Naive thymus-derived CD4-positive, alpha-beta T cell (primary cell): ENCODE measurements at regions of chr15 and their contacts with region 1.

Region 1: DNA sequence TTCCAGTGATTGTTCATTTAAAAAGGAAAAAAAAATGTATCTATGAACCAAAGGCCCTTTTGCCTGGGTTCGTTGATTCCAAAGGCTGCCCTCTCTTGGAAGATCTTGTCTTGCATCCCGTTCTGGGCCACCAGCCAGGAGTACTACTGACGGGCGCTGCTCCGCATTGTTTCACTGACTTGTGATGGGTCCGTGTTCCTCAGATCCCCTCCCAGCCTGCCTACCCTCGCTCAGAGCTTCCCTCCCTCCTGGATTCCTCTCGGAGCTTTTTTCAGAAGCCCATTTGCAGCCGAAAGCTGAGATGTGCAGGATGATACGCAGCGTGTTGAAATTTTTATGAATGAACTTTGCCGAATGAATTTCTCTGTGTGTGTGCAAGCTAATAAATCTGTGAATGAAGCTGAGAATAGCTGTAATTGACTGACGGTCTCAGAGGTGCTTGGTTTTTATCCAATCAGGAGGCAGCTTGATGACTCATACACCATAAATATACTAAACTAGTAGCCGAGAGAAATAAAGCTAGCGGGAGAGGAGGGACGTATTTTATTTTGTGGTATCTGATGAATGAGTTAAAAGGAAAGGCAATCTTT is at the start of gene SHC4:
- DNase-seq: peak in 4 of 9 donors; percentile 21 to 37 (median 32)
- ATAC-seq: peak; percentile 64
- H3K4me3 ChIP-seq: peak within 1 kb of the TSS; percentile 58
- H3K4me3 Mint-ChIP-seq: peak within 1 kb of the TSS; percentile 68 to 91 (median 84)
- H3K27ac ChIP-seq: no peak within 1 kb of the TSS
- H3K27ac Mint-ChIP-seq: peak within 1 kb of the TSS in 3 of 9 donors; percentile 41 to 68 (median 56)
- H3K4me1 ChIP-seq: peaks cover 17 to 23% of the 10 kb centered on the region in 2 donors
- H3K4me1 Mint-ChIP-seq: peaks cover 15 to 41% (median 21%) of the 10 kb centered on the region in 7 donors
- H3K27me3 ChIP-seq: peaks cover 0 to 18% of the 10 kb centered on the region in 2 donors
- H3K27me3 Mint-ChIP-seq: peaks cover 13 to 65% (median 44%) of the 10 kb centered on the region in 5 donors
- total RNA-seq, gene SHC4: 1.2 TPM in 1 of 5 experiments, not detected in the others

Region 2: DNA sequence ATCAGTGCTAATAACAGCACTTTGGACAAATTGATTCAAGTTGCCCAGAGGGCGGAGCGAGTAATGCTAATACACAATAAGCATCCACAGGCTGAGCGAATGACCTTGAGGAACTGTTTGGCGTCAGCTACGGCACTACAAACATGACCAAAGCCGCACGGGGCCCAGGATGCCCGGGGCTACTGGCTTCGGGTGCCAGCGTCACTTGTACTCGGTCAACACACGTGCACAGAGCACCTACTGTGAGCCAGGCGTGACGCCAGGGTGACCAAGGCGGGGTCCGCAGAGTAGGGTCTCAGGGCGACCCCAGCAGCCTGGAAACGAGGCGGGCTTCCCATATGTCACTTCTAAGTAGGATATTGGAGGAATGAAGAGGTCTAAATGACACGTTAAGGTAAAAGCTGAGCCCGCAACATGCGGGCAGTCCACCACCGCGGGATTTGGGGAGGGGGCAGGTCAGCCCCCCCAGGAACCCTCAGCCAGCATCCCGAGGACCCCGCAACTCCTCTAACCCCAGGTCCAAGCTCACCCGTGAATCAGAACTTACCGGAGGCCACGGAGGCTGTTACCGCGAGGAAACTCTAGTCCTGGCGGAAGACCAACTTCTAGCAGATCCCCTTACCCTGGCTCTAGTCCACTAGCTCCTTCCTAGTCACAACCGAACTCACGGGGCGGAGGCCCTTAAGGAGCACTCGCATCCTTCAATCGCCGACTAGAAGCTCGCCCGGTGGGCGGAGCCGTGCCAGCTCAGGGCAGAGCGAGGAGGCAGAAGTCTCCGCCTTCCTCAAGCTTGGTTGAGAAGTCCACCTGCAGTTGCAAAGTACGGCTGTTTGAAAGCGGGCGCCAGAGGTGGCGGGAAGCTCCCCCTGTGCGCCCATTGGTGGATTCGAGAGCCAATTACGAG is 153.0 kb before region 1 on chr15 and contains the start of gene CEP152:
- CTCF ChIA-PET with region 1: no interaction called
- POLR2A ChIA-PET with region 1: no interaction called
- intact Hi-C with region 1: loop called in 1 of 2 experiments (anchors 2 kb)
- DNase-seq: peak; percentile 91 to 99 (median 98)
- ATAC-seq: peak; percentile 98
- H3K4me3 ChIP-seq: peak within 1 kb of the TSS; percentile 78
- H3K4me3 Mint-ChIP-seq: peak within 1 kb of the TSS; percentile 82 to 96 (median 89)
- H3K27ac ChIP-seq: peak within 1 kb of the TSS; percentile 76
- H3K27ac Mint-ChIP-seq: peak within 1 kb of the TSS; percentile 14 to 96 (median 87)
- H3K4me1 ChIP-seq: peaks cover 9 to 13% of the 10 kb centered on the region in 2 donors
- H3K4me1 Mint-ChIP-seq: peaks cover 12 to 38% (median 33%) of the 10 kb centered on the region in 7 donors
- H3K27me3 ChIP-seq: no peaks in the 10 kb centered on the region
- H3K27me3 Mint-ChIP-seq: peaks cover 0 to 24% (median 0%) of the 10 kb centered on the region in 5 donors
- total RNA-seq, gene CEP152: 6.2 to 26.3 (median 17.0) TPM

Region 3: GRCh38 chr15:48925714-48926223 is 37.9 kb before region 1 on chr15:
- CTCF ChIA-PET with region 1: no interaction called
- POLR2A ChIA-PET with region 1: no interaction called
- intact Hi-C with region 1: loop called in 1 of 2 experiments (anchors 5 kb)
- DNase-seq: peak in 1 of 9 donors; percentile 40
- ATAC-seq: no peak
- H3K4me3 ChIP-seq: no peak overlapping the region
- H3K4me3 Mint-ChIP-seq: peak overlapping the region in 1 of 10 donors; percentile 11
- H3K27ac ChIP-seq: no peak overlapping the region
- H3K27ac Mint-ChIP-seq: peak overlapping the region in 1 of 9 donors; percentile 79
- H3K4me1 ChIP-seq: no peaks in the 10 kb centered on the region
- H3K4me1 Mint-ChIP-seq: peaks cover 0 to 42% (median 0%) of the 10 kb centered on the region in 7 donors
- H3K27me3 ChIP-seq: no peaks in the 10 kb centered on the region
- H3K27me3 Mint-ChIP-seq: peaks cover 0 to 42% (median 28%) of the 10 kb centered on the region in 5 donors

Region 4: DNA sequence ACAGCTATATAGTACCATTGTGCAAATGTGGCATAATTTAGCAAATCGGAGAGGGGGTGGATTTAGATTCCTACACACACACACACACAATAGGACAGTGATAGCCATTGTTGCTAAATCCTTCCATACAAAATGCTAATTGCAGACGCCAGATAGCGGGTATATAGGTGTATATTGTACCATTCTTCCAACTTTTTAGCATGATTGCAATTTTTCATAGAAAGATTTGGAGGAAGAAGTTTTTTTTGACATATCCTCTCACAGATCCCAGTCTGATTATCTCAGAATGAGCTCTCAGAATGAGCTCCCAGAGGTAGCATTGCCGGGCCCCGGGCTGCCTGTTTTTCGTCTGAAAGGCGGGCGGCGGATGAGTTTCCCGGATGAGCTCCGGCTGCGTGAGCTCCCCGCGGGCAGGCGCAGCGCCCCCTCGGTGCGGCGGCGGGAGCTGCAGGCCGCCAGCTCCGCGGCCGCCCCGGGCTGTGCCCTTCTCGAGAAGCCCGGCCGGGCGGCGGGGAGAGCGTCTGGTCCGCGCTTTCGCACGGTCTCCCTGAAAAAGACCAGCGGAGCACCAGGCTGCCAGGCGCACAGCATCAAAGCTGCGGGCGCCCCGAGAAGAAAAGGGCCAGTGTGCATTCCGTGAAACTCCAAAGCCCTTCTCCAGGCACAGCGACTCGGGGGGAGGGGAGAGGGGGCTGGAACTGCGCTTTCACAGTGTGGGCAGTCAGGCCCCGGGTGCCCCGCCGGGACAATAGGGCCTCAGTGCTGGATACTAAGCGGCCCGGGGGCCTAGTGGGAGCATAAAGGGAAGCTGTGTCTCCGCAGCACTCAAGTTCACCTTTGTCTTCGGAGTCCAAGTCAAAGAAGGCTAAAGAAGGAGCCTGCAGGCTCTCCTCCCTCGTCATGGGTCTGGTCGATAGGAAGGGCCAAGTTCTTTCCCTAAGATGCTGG is 12.1 kb after region 1 on chr15:
- CTCF ChIA-PET with region 1: interaction called, 16 read pairs
- POLR2A ChIA-PET with region 1: no interaction called
- intact Hi-C with region 1: loop called in 1 of 2 experiments (anchors 1 kb)
- DNase-seq: peak; percentile 48 to 87 (median 71)
- ATAC-seq: peak; percentile 98
- H3K4me3 ChIP-seq: peak overlapping the region; percentile 58
- H3K4me3 Mint-ChIP-seq: peak overlapping the region; percentile 29 to 75 (median 63)
- H3K27ac ChIP-seq: no peak overlapping the region
- H3K27ac Mint-ChIP-seq: no peak overlapping the region
- H3K4me1 ChIP-seq: peaks cover 3 to 4% of the 10 kb centered on the region in 2 donors
- H3K4me1 Mint-ChIP-seq: peaks cover 0 to 10% (median 0%) of the 10 kb centered on the region in 7 donors
- H3K27me3 ChIP-seq: no peaks in the 10 kb centered on the region
- H3K27me3 Mint-ChIP-seq: peaks cover 4 to 38% (median 19%) of the 10 kb centered on the region in 5 donors

Region 5: GRCh38 chr15:49046220-49047102 is 82.8 kb after region 1 on chr15 and contains the start of gene SECISBP2L:
- CTCF ChIA-PET with region 1: no interaction called
- POLR2A ChIA-PET with region 1: no interaction called
- intact Hi-C with region 1: no loop called
- DNase-seq: peak; percentile 73 to 92 (median 91)
- ATAC-seq: peak; percentile 98
- H3K4me3 ChIP-seq: peak within 1 kb of the TSS; percentile 86
- H3K4me3 Mint-ChIP-seq: peak within 1 kb of the TSS; percentile 96 to 99 (median 98)
- H3K27ac ChIP-seq: peak within 1 kb of the TSS; percentile 82
- H3K27ac Mint-ChIP-seq: peak within 1 kb of the TSS; percentile 91 to 97 (median 93)
- H3K4me1 ChIP-seq: peaks cover 16 to 18% of the 10 kb centered on the region in 2 donors
- H3K4me1 Mint-ChIP-seq: peaks cover 23 to 41% (median 34%) of the 10 kb centered on the region in 7 donors
- H3K27me3 ChIP-seq: no peaks in the 10 kb centered on the region
- H3K27me3 Mint-ChIP-seq: no peaks in the 10 kb centered on the region
- total RNA-seq, gene SECISBP2L: 39.3 to 75.8 (median 55.8) TPM